HEK293T (cell line): ENCODE measurements at regions of chr14 and their contacts with region 1.

Region 1: DNA sequence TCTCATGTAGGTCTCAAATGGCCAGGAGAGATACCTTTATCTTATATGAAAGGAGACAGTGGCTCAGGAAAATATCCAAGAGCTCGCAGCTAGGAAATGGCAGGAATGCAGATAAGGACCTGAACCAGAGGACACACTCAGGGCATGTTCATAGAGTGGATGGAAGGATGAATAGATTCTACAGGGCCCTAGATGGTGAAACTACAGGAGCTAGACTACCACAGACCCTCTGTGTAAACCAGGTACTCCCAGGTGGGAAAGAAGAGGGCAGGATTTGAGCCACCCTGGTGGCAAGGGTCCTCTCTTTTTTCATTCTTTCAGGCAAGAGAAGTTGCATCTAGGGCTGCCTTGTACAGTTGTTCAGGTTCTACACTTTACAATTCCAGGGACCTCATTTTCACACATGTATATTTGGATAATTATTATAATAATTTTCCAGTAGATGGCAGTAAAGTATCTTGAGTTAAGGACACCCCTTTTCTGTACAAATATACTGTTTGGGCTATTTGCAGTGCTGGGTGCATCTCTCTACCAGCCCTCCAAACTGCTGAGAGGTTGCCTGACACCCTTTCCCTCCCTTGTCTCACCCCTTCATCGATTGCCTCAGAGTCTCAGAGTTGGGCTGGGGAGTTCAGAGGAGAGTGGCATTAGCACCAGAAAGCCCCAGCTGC is 10.5 kb upstream of the ZDHHC22 start:
- DNase-seq: no peak

Region 2: DNA sequence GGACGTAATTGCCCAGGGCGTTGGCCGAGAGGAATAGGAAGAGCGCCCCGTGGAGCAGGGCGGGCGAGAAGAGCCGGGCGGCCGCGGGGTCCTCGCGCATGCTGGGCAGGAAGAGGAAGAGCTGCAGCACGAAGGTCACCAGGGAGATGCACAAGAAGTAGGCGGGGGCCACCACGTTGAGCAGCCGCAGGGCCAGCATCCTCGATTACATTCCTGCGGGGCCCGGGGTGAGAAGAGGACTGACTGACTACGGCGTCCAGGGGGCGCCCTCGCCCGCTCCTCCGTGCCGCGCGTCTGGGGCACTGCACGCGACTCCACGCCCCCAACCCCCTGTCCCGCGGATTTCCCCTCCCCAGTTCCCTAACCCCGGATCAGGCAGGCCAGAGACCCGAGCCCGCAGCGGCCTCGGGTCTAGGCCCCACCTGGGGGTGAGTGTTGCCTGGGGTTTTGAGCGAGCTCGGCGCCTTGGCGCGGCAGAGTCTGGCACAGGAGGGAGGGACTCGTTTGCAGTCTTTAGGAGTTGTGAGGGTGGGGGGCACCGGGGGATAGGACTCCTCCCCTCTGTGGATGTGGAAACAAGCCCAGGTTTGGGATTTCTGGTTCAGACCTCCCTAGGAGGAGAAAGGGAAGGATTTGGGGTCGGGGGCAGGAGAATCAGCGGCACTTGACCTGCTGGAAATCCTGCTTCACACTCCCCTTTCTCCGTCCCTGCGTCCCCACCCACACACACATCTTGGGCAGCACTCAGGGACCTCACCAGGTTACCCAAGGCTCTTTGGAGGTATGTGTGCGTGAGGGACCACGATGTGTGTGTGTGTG is 12.3 kb before region 1 on chr14:
- CTCF ChIA-PET with region 1: interaction called, 39 read pairs
- POLR2A ChIA-PET with region 1: interaction called, 5 read pairs
- DNase-seq: peak; percentile 83

Region 3: GRCh38 chr14:77212943-77213678 is 61.1 kb after region 1 on chr14:
- CTCF ChIA-PET with region 1: interaction called, 34 read pairs
- POLR2A ChIA-PET with region 1: no interaction called
- DNase-seq: peak; percentile 79

Region 4: GRCh38 chr14:77301103-77301502 is 149.1 kb after region 1 on chr14:
- CTCF ChIA-PET with region 1: interaction called, 11 read pairs
- POLR2A ChIA-PET with region 1: no interaction called
- DNase-seq: peak; percentile 77

Region 5: GRCh38 chr14:77314043-77314442 is 162.0 kb after region 1 on chr14:
- CTCF ChIA-PET with region 1: interaction called, 12 read pairs
- POLR2A ChIA-PET with region 1: no interaction called
- DNase-seq: no peak